Endothelial cell of umbilical vein (primary cell): ENCODE measurements at regions of chr1 and their contacts with region 1.

Region 1: DNA sequence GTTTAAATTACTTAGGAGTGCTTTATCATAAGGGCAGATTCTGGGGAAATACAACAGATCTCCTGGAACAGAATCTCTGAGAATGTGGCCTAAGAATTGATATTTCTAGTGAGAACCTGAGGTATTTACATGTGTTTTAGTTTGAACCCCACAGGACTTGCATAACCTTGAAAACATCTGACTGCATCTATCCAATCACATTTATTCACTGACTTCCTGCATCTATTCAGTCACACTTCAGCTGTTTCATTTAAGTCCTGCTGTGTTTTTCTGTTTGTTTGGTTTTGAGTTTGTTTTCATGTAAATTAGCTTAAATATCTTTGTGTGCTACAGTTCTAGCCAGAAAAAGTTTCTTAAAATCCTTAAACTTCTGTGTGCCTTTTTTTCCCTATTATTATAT is 1260.7 kb downstream of the PLA2G4A start:
- DNase-seq: peak; percentile 39
- H3K4me3 ChIP-seq: no peak overlapping the region
- H3K27ac ChIP-seq: peak overlapping the region; percentile 38
- H3K4me1 ChIP-seq: peaks cover 16% of the 10 kb centered on the region
- H3K27me3 ChIP-seq: no peaks in the 10 kb centered on the region
- CTCF ChIP-seq: no peak
- POLR2A ChIP-seq: no peak

Region 2: GRCh38 chr1:187655175-187655574 is 434.3 kb before region 1 on chr1:
- CTCF ChIA-PET with region 1: no interaction called
- POLR2A ChIA-PET with region 1: no interaction called
- dilution Hi-C with region 1: no loop called
- intact Hi-C with region 1: loop called (anchors 1 kb)
- DNase-seq: peak; percentile 61
- H3K4me3 ChIP-seq: no peak overlapping the region
- H3K27ac ChIP-seq: peak overlapping the region; percentile 94
- H3K4me1 ChIP-seq: peaks cover 3% of the 10 kb centered on the region
- H3K27me3 ChIP-seq: no peaks in the 10 kb centered on the region
- CTCF ChIP-seq: no peak
- POLR2A ChIP-seq: no peak

Region 3: GRCh38 chr1:187848321-187848720 is 241.1 kb before region 1 on chr1:
- CTCF ChIA-PET with region 1: no interaction called
- POLR2A ChIA-PET with region 1: no interaction called
- dilution Hi-C with region 1: no loop called
- intact Hi-C with region 1: loop called (anchors 2 kb)
- DNase-seq: peak; percentile 87
- H3K4me3 ChIP-seq: no peak overlapping the region
- H3K27ac ChIP-seq: peak overlapping the region; percentile 21
- H3K4me1 ChIP-seq: peaks cover 6% of the 10 kb centered on the region
- H3K27me3 ChIP-seq: no peaks in the 10 kb centered on the region
- CTCF ChIP-seq: no peak
- POLR2A ChIP-seq: no peak

Region 4: DNA sequence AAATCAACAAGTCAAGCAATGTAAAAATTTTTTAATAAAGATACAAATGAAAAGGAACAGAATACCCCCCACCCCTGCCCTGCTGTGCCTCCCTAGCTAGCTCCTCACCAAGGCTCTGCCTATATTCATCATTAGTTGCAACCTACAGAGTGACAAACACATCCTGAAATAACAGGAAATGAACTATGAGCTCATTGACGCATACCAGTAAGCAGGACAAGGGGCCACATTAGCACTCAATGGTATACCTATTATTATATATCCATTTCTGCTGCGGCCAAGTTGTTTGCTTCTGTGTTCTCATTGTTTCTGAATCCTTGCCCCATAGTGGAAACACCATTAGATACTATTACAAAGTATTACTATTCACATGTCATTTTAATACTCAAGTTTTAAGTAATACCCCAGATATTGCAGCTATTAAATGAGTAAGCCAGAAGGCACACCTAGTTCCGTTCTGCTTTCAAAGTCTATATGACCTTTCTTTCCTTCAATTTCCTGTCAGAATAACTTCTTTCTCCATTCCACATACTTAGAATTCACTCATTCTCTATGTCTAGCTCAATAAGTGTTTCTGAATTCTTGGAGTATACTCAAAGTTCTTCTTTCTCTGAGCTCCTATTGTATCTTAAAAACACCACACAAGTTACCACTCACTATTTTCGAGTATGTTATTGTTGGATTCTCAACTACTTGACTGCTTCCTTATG is 45.8 kb before region 1 on chr1:
- CTCF ChIA-PET with region 1: interaction called, 14 read pairs
- POLR2A ChIA-PET with region 1: no interaction called
- dilution Hi-C with region 1: no loop called
- intact Hi-C with region 1: loop called (anchors 1 kb)
- DNase-seq: peak; percentile 92
- H3K4me3 ChIP-seq: peak overlapping the region in 1 of 3 experiments; percentile 26
- H3K27ac ChIP-seq: peak overlapping the region; percentile 94
- H3K4me1 ChIP-seq: peaks cover 33% of the 10 kb centered on the region
- H3K27me3 ChIP-seq: no peaks in the 10 kb centered on the region
- CTCF ChIP-seq: no peak
- POLR2A ChIP-seq: no peak

Region 5: DNA sequence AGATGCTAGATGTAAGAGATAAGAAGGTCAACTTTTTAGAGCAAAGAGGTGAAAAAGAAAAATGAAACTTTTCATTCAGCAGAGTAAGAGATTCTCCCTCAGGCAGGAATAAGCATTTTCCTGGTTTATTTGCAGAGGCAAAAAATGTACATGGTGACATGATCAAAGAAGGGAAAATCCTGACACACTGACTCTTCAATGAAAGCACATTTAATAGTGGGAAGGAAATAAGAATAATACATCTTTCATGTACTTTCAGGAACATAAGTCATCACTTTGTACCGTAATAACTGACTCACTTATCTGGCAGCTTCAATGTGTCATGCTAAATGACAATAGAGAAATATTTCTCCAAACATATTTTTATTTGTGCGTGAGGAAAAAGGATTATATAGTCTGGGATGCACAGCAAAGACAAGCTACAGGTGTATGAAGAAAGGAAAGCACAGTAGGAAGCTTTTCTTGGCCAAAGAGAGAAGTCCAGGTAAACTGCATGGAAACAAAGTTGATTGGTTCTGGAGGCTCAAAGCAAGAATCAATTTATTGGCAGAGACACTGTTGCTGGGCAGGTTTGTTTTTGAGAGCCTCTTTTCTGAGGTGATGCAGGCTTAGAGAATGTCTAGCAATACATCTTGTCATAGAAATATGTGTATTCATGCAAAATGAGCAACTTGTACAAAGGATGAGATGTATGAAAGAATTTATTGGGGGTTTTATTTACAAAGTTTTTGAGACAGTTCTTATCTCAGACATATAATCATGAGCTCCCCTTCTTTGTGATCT is 148.3 kb after region 1 on chr1:
- CTCF ChIA-PET with region 1: no interaction called
- POLR2A ChIA-PET with region 1: no interaction called
- dilution Hi-C with region 1: no loop called
- intact Hi-C with region 1: loop called (anchors 5 kb)
- DNase-seq: peak; percentile 79
- H3K4me3 ChIP-seq: peak overlapping the region in 1 of 3 experiments; percentile 23
- H3K27ac ChIP-seq: peak overlapping the region; percentile 73
- H3K4me1 ChIP-seq: peaks cover 24% of the 10 kb centered on the region
- H3K27me3 ChIP-seq: no peaks in the 10 kb centered on the region
- CTCF ChIP-seq: no peak
- POLR2A ChIP-seq: no peak

Region 6: GRCh38 chr1:188397521-188397920 is 308.1 kb after region 1 on chr1:
- CTCF ChIA-PET with region 1: no interaction called
- POLR2A ChIA-PET with region 1: no interaction called
- dilution Hi-C with region 1: no loop called
- intact Hi-C with region 1: no loop called
- DNase-seq: no peak
- H3K4me3 ChIP-seq: no peak overlapping the region
- H3K27ac ChIP-seq: no peak overlapping the region
- H3K4me1 ChIP-seq: no peaks in the 10 kb centered on the region
- H3K27me3 ChIP-seq: no peaks in the 10 kb centered on the region
- CTCF ChIP-seq: no peak
- POLR2A ChIP-seq: no peak